ENCODE measurements at regions of chr17 and their contacts with region 1.

Region 1: GRCh38 chr17:2736956-2737355 is 12.5 kb downstream of the CCDC92B start:
- DNase-seq: peak; percentile 96
- H3K4me3 ChIP-seq: no peak overlapping the region
- H3K27ac ChIP-seq: peak overlapping the region; percentile 68
- H3K4me1 ChIP-seq: peaks cover 4% of the 10 kb centered on the region
- H3K27me3 ChIP-seq: no peaks in the 10 kb centered on the region
- CTCF ChIP-seq: no peak

Region 2: DNA sequence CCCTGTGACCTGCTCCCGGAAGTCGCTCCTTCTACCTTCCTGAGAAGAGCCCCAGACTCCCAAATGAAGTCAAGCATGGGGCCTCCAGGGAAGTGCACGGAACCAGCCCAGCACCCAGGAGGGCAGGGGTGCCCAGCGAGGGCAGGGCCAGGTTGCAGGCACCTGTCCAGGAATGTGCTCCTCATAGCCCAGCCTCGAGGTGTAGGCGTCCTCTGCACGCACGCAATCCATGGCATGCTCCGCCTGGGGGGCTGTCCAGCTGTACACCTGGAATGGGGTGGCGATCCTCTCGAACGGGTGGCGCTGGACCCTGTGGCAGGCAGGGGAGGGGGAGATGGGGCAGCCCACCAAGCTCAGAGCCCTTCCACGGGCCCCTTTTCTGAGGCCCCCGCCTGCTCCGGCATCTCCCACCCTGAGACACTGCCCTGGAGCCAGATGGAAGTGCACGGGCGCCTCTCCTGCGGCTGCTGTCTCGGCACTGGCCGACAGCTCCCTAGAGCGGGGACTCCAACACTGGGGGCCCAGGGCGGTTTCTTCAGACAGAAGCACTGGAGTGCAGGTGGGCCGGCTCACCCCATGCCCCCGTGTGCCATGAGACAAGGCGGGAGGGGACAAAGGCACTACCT is 36.3 kb before region 1 on chr17:
- CTCF ChIA-PET with region 1: no interaction called
- dilution Hi-C with region 1: no loop called
- in situ Hi-C with region 1: no loop called
- intact Hi-C with region 1: no loop called
- DNase-seq: no peak
- H3K4me3 ChIP-seq: no peak overlapping the region
- H3K27ac ChIP-seq: no peak overlapping the region
- H3K4me1 ChIP-seq: no peaks in the 10 kb centered on the region
- H3K27me3 ChIP-seq: no peaks in the 10 kb centered on the region
- CTCF ChIP-seq: no peak

Region 3: GRCh38 chr17:2755891-2756724 is 19.2 kb after region 1 on chr17:
- CTCF ChIA-PET with region 1: no interaction called
- dilution Hi-C with region 1: no loop called
- in situ Hi-C with region 1: no loop called
- intact Hi-C with region 1: loop called (anchors 2 kb)
- DNase-seq: no peak
- H3K4me3 ChIP-seq: peak overlapping the region in 1 of 3 experiments; percentile 23
- H3K27ac ChIP-seq: no peak overlapping the region
- H3K4me1 ChIP-seq: no peaks in the 10 kb centered on the region
- H3K27me3 ChIP-seq: peaks cover 11% of the 10 kb centered on the region
- CTCF ChIP-seq: no peak

Region 4: GRCh38 chr17:2770129-2770528 is 33.2 kb after region 1 on chr17:
- CTCF ChIA-PET with region 1: no interaction called
- dilution Hi-C with region 1: loop called (anchors 5 kb)
- in situ Hi-C with region 1: no loop called
- intact Hi-C with region 1: no loop called
- DNase-seq: no peak
- H3K4me3 ChIP-seq: no peak overlapping the region
- H3K27ac ChIP-seq: no peak overlapping the region
- H3K4me1 ChIP-seq: no peaks in the 10 kb centered on the region
- H3K27me3 ChIP-seq: peaks cover 3% of the 10 kb centered on the region
- CTCF ChIP-seq: no peak